Activated CD4-positive, alpha-beta T cell treated with anti-CD3 and anti-CD28 coated beads for 36 hours (primary cell): ENCODE measurements at regions of chr7 and their contacts with region 1.

Region 1: DNA sequence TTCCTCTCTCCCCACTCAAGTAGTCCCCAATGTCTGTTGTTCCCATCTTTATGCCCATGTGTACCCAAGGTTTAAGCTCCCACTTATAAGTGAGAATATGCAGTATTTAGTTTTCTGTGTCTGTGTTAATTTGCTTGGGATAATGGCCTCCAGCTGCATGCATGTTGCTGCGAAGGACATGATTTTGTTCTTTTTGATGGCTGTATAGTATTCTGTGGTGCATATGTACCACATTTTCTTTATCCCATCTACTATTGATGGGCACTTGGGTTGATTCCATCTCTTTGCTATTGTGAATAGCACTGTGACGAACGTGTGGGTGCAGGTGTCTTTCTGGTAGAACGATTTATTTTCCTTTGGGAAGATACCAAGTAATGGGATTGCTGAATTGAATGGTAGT is 170.2 kb upstream of the AUTS2 start:
- DNase-seq: no peak
- ATAC-seq: no peak
- H3K4me3 Mint-ChIP-seq: no peak overlapping the region
- H3K27ac Mint-ChIP-seq: no peak overlapping the region
- H3K4me1 Mint-ChIP-seq: peaks cover 7% of the 10 kb centered on the region
- H3K27me3 Mint-ChIP-seq: peaks cover 18% of the 10 kb centered on the region

Region 2: DNA sequence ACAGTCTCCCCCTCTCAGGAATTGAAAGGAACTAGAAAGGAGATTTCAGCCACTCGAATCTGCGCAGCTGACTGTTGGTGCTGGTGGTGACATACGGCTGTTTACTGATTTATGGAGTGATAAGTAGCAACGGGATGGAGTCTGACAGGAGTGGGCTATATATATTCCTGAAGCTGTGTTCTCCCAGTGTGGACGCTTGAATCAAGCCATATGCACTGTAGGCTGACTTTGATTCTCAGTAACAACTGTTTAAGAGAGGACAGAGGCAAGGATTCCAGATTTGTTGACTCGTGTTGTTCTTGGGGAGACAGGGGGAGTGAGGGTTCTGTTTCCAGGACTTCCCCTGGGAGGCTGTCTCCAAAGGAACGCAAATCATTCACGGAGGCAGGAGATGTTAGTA is 89.9 kb before region 1 on chr7:
- CTCF ChIA-PET with region 1: no interaction called
- POLR2A ChIA-PET with region 1: interaction called, 10 read pairs
- intact Hi-C with region 1: no loop called
- DNase-seq: no peak
- ATAC-seq: no peak
- H3K4me3 Mint-ChIP-seq: no peak overlapping the region
- H3K27ac Mint-ChIP-seq: no peak overlapping the region
- H3K4me1 Mint-ChIP-seq: no peaks in the 10 kb centered on the region
- H3K27me3 Mint-ChIP-seq: peaks cover 2% of the 10 kb centered on the region

Region 3: GRCh38 chr7:69703099-69703498 is 275.0 kb after region 1 on chr7:
- CTCF ChIA-PET with region 1: no interaction called
- POLR2A ChIA-PET with region 1: no interaction called
- intact Hi-C with region 1: no loop called
- DNase-seq: no peak
- ATAC-seq: no peak
- H3K4me3 Mint-ChIP-seq: no peak overlapping the region
- H3K27ac Mint-ChIP-seq: no peak overlapping the region
- H3K4me1 Mint-ChIP-seq: no peaks in the 10 kb centered on the region
- H3K27me3 Mint-ChIP-seq: peaks cover 4% of the 10 kb centered on the region